ENCODE measurements at regions of chrX and their contacts with region 1.

Region 1: GRCh38 chrX:104935581-104935980 is 284.9 kb downstream of the TEX13A start:
- H3K4me3 ChIP-seq: no peak overlapping the region
- H3K27ac ChIP-seq: no peak overlapping the region
- H3K4me1 ChIP-seq: no peaks in the 10 kb centered on the region
- CTCF ChIP-seq: no peak

Region 2: DNA sequence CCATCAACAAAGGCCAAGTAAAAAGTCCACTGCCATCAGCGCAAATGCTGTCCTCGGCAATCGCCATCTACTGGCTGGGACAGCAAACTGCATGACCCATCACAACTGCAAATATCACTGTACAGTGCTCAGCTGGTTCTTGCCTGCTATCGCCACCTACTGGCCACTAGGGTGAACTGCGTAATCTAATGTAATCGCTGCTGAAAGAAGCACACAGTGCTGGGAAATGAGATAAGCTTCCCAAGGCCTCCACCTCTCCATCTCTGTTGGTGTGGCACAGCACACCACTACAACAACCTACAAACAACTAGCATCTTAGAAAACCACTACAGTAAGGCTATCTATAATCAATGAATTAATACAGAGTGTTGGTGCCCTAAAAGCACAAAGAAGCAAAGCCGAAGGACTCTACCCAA is 13.4 kb before region 1 on chrX:
- CTCF ChIA-PET with region 1: interaction called, 23 read pairs
- POLR2A ChIA-PET with region 1: no interaction called
- H3K4me3 ChIP-seq: no peak overlapping the region
- H3K27ac ChIP-seq: no peak overlapping the region
- H3K4me1 ChIP-seq: no peaks in the 10 kb centered on the region
- CTCF ChIP-seq: peak; percentile 90